ENCODE measurements at regions of chr1 and their contacts with region 1.

Region 1: GRCh38 chr1:34984793-34985608 is at the start of gene TMEM35B:
- DNase-seq: peak; percentile 84
- H3K4me3 Mint-ChIP-seq: peak within 1 kb of the TSS; percentile 97
- H3K27ac Mint-ChIP-seq: peak within 1 kb of the TSS; percentile 91
- H3K4me1 Mint-ChIP-seq: peaks cover 46% of the 10 kb centered on the region
- H3K27me3 Mint-ChIP-seq: no peaks in the 10 kb centered on the region
- total RNA-seq, gene TMEM35B: 26.5 to 28.8 TPM

Region 2: GRCh38 chr1:34362949-34363348 is 622.1 kb before region 1 on chr1:
- CTCF ChIA-PET with region 1: no interaction called
- POLR2A ChIA-PET with region 1: no interaction called
- intact Hi-C with region 1: no loop called
- DNase-seq: no peak
- H3K4me3 Mint-ChIP-seq: no peak overlapping the region
- H3K27ac Mint-ChIP-seq: no peak overlapping the region
- H3K4me1 Mint-ChIP-seq: no peaks in the 10 kb centered on the region
- H3K27me3 Mint-ChIP-seq: peaks cover 25% of the 10 kb centered on the region

Region 3: GRCh38 chr1:34859446-34860200 is 125.4 kb before region 1 on chr1 and contains the start of gene SMIM12:
- CTCF ChIA-PET with region 1: interaction called, 24 read pairs
- POLR2A ChIA-PET with region 1: interaction called, 4 read pairs
- intact Hi-C with region 1: loop called (anchors 10 kb)
- DNase-seq: peak; percentile 96
- H3K4me3 Mint-ChIP-seq: peak within 1 kb of the TSS; percentile 98
- H3K27ac Mint-ChIP-seq: peak within 1 kb of the TSS; percentile 98
- H3K4me1 Mint-ChIP-seq: peaks cover 42% of the 10 kb centered on the region
- H3K27me3 Mint-ChIP-seq: no peaks in the 10 kb centered on the region
- total RNA-seq, gene SMIM12: 46.5 to 46.7 TPM

Region 4: GRCh38 chr1:34865981-34866761 is 118.8 kb before region 1 on chr1:
- CTCF ChIA-PET with region 1: interaction called, 24 read pairs
- POLR2A ChIA-PET with region 1: interaction called, 3 read pairs
- intact Hi-C with region 1: loop called (anchors 10 kb)
- DNase-seq: peak; percentile 96
- H3K4me3 Mint-ChIP-seq: peak overlapping the region; percentile 74
- H3K27ac Mint-ChIP-seq: peak overlapping the region; percentile 81
- H3K4me1 Mint-ChIP-seq: peaks cover 17% of the 10 kb centered on the region
- H3K27me3 Mint-ChIP-seq: no peaks in the 10 kb centered on the region

Region 5: DNA sequence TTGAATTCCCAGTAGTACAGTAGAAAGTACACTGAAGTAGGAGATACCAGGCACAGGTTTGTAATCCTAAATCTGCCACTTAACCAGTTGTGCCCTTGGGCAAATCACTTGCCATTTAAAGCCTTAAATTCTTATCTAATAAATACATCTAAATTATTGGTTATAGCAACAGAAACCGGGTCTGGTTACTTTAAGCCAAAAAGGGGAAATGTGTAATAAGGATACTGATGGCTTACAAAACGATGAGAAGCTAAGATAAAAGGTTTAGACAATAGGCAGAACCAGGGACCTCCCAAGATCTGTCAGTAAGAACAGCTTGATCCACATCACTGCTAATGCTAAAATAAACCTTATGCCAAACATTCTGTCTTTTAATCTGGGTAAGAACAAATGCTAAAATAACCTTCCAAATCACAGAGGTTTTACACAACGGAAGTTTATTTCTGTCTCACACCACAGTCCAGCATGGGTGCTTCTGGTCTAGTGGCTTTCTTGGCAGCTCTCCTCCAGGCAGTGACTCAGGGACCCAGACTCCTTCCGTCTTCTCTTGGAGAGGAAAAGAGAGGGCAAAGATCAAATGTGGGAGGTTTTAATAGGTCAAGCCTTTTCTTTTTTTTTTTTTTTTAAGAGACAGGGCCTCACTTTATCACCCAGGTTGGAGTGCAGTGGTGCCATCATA is 77.7 kb after region 1 on chr1:
- CTCF ChIA-PET with region 1: no interaction called
- POLR2A ChIA-PET with region 1: no interaction called
- intact Hi-C with region 1: no loop called
- DNase-seq: no peak
- H3K4me3 Mint-ChIP-seq: no peak overlapping the region
- H3K27ac Mint-ChIP-seq: no peak overlapping the region
- H3K4me1 Mint-ChIP-seq: no peaks in the 10 kb centered on the region
- H3K27me3 Mint-ChIP-seq: peaks cover 17% of the 10 kb centered on the region

Region 6: GRCh38 chr1:35180776-35181374 is 195.9 kb after region 1 on chr1:
- CTCF ChIA-PET with region 1: interaction called, 4 read pairs
- POLR2A ChIA-PET with region 1: no interaction called
- intact Hi-C with region 1: loop called (anchors 5 kb)
- DNase-seq: peak; percentile 33
- H3K4me3 Mint-ChIP-seq: peak overlapping the region; percentile 27
- H3K27ac Mint-ChIP-seq: peak overlapping the region; percentile 83
- H3K4me1 Mint-ChIP-seq: peaks cover 65% of the 10 kb centered on the region
- H3K27me3 Mint-ChIP-seq: no peaks in the 10 kb centered on the region

Measured in activated CD4-positive, alpha-beta memory T cell treated with anti-CD3 and anti-CD28 coated beads for 36 hours (primary cell).